B cell (primary cell): ENCODE measurements at regions of chr3 and their contacts with region 1.

Region 1: DNA sequence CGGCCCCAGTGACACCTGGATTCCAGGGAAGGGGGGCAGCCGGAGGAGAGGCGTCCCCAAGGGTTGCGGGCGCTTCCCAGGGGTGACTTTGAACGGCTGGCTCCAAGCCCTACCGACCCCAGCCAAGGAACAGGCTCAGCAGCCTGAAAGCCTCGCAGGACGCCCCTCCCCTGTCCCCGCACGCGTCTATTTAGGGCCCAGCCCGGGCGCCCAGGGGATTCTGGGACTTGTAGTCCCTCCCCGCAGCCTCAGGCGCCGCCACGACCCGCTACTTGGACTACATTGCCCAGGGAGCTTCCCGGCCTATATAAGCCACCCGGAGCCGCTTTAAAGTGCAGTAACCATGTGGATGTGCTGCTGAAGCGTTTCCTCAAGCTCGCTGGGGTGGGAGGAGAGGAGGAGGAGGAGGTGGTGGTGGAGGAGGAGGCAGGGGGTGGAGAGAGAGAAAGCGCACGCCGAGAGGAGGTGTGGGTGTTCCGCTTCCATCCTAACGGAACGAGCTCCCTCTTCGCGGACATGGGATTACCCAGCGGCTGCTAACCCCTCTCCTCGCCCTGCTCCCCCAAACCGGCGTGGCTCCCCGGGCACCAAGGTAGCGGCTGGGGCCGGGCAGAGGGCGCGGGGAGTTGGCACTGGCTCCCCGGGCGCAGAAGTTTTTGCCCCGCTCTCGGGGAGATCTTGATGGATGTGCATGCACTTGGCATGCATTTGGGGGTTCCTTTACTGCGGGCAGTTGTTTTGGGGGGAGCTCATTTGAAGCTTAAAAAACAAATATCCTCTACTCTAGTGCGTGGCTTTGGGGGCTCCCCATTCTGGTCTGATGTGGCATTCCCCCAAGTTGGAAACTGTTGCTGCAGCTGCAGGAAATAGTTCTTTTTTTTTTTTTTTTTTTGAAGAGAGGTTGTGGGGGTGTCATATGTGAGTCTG is at the start of gene ITPR1:
- DNase-seq: peak; percentile 98
- ATAC-seq: peak; percentile 88
- H3K4me3 ChIP-seq: peak within 1 kb of the TSS; percentile 90 to 98 (median 92)
- H3K4me3 Mint-ChIP-seq: peak within 1 kb of the TSS; percentile 96
- H3K27ac ChIP-seq: peak within 1 kb of the TSS; percentile 86 to 89
- H3K27ac Mint-ChIP-seq: peak within 1 kb of the TSS; percentile 95
- H3K4me1 ChIP-seq: peaks cover 34 to 39% of the 10 kb centered on the region in 2 donors
- H3K4me1 Mint-ChIP-seq: peaks cover 48% of the 10 kb centered on the region
- H3K27me3 ChIP-seq: no peaks in the 10 kb centered on the region
- H3K27me3 Mint-ChIP-seq: no peaks in the 10 kb centered on the region
- CTCF ChIP-seq: no peak
- total RNA-seq, gene ITPR1: 332 and 357 TPM in 2 replicates

Region 2: DNA sequence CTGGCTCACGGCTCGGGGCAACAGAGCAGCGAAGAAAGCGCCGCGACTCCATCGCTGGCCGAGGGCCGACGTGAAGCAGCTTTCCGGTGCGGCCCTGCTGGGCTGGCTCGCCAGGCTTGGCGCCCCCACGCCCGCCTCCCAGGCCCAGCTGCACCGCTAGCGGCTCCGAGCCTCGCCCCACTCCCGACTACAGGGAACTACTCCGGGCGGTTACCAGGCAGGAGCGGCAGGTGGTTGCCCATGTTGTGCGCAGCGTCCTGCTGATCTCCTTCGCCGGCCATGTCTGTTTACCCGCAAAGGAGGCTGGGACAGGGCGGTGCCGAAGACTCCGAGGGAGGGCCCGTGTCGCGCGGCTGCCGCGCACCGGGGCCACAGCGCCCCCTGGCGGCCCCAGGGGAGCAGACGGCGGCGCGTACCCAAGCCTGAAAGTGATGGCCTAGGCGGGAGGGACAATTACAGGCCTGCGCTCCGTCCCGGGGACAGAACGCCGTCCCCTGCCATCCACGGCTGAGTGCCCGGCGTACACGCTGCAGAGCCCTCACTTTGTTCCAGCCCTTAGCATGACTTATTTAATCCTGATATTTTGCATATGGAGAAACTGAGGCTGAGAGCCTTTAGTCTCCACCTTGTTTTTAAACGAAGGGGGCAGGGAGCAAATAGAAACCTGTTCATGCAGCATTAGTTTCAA is 1313.7 kb before region 1 on chr3 and contains the start of gene CRBN:
- CTCF ChIA-PET with region 1: no interaction called
- POLR2A ChIA-PET with region 1: no interaction called
- intact Hi-C with region 1: loop called (anchors 2 kb)
- DNase-seq: peak; percentile 92
- ATAC-seq: peak; percentile 98
- H3K4me3 ChIP-seq: peak within 1 kb of the TSS; percentile 62 to 95 (median 93)
- H3K4me3 Mint-ChIP-seq: peak within 1 kb of the TSS; percentile 98
- H3K27ac ChIP-seq: peak within 1 kb of the TSS; percentile 28 to 84
- H3K27ac Mint-ChIP-seq: peak within 1 kb of the TSS; percentile 86
- H3K4me1 ChIP-seq: peaks cover 18 to 19% of the 10 kb centered on the region in 2 donors
- H3K4me1 Mint-ChIP-seq: peaks cover 37% of the 10 kb centered on the region
- H3K27me3 ChIP-seq: peaks cover 0 to 6% (median 0%) of the 10 kb centered on the region in 4 experiments
- H3K27me3 Mint-ChIP-seq: peaks cover 14% of the 10 kb centered on the region
- CTCF ChIP-seq: peak; percentile 98
- total RNA-seq, gene CRBN: 92.6 and 95.1 TPM in 2 replicates

Region 3: GRCh38 chr3:4350789-4351163 is 142.5 kb before region 1 on chr3:
- CTCF ChIA-PET with region 1: interaction called, 11 read pairs
- POLR2A ChIA-PET with region 1: no interaction called
- intact Hi-C with region 1: loop called (anchors 10 kb)
- DNase-seq: peak; percentile 73
- ATAC-seq: peak; percentile 74
- H3K4me3 ChIP-seq: peak overlapping the region in 4 of 5 experiments; percentile 7 to 54 (median 47)
- H3K4me3 Mint-ChIP-seq: peak overlapping the region; percentile 62
- H3K27ac ChIP-seq: no peak overlapping the region
- H3K27ac Mint-ChIP-seq: no peak overlapping the region
- H3K4me1 ChIP-seq: peaks cover 4 to 6% of the 10 kb centered on the region in 2 donors
- H3K4me1 Mint-ChIP-seq: peaks cover 9% of the 10 kb centered on the region
- H3K27me3 ChIP-seq: no peaks in the 10 kb centered on the region
- H3K27me3 Mint-ChIP-seq: no peaks in the 10 kb centered on the region
- CTCF ChIP-seq: peak; percentile 89

Region 4: GRCh38 chr3:4474683-4475490 is 18.4 kb before region 1 on chr3:
- CTCF ChIA-PET with region 1: interaction called, 3 read pairs
- POLR2A ChIA-PET with region 1: interaction called, 4 read pairs
- intact Hi-C with region 1: loop called (anchors 2 kb)
- DNase-seq: peak; percentile 38
- ATAC-seq: peak; percentile 56
- H3K4me3 ChIP-seq: no peak overlapping the region
- H3K4me3 Mint-ChIP-seq: peak overlapping the region; percentile 53
- H3K27ac ChIP-seq: peak overlapping the region; percentile 42 to 77
- H3K27ac Mint-ChIP-seq: peak overlapping the region; percentile 74
- H3K4me1 ChIP-seq: peaks cover 18 to 21% of the 10 kb centered on the region in 2 donors
- H3K4me1 Mint-ChIP-seq: peaks cover 14% of the 10 kb centered on the region
- H3K27me3 ChIP-seq: no peaks in the 10 kb centered on the region
- H3K27me3 Mint-ChIP-seq: no peaks in the 10 kb centered on the region
- CTCF ChIP-seq: no peak

Region 5: GRCh38 chr3:4524088-4525023 is 31.1 kb after region 1 on chr3:
- CTCF ChIA-PET with region 1: interaction called, 44 read pairs
- POLR2A ChIA-PET with region 1: interaction called, 8 read pairs
- intact Hi-C with region 1: loop called (anchors 1 kb)
- DNase-seq: no peak
- ATAC-seq: no peak
- H3K4me3 ChIP-seq: no peak overlapping the region
- H3K4me3 Mint-ChIP-seq: peak overlapping the region; percentile 21
- H3K27ac ChIP-seq: no peak overlapping the region
- H3K27ac Mint-ChIP-seq: peak overlapping the region; percentile 17
- H3K4me1 ChIP-seq: peaks cover 25 to 48% of the 10 kb centered on the region in 2 donors
- H3K4me1 Mint-ChIP-seq: peaks cover 73% of the 10 kb centered on the region
- H3K27me3 ChIP-seq: no peaks in the 10 kb centered on the region
- H3K27me3 Mint-ChIP-seq: no peaks in the 10 kb centered on the region
- CTCF ChIP-seq: no peak

Region 6: DNA sequence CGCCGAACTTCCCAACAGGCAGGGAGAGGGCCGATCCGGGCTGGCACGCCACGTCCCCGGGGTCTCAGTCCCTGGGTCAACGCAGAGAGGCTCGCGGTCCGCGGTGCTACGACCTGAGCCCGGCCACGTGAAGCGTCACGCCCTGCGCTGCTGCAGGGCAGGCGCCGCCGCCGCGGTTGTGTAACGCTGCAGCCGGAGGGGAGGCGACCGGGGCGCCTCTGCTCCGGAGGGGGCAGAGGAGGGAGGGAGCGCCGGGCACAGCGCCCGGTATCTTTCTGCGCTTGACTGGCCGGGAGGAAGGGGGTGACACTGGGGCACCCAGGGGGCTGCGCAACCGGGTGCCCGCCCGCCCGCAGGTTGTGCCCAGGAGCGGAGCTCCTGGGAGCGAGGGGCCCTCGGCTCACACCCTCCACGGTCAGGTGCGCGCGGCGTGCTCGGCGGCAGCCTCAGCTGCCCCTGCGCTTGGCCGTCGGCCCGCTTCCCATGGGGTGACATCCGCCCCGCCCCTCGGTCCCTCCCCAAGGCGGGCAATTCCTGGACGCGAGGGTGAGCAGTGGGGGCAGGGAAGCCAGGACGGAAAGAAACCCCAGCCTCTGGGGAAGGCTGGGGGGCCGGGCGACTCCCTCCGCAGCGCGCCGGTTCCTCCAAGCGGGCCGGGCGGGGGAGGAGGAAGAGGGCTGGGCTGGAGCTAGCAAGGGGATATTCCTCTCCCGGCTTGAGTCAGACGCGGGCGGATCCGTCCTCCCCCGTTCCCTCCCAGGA is 485.1 kb after region 1 on chr3:
- CTCF ChIA-PET with region 1: no interaction called
- POLR2A ChIA-PET with region 1: interaction called, 3 read pairs
- intact Hi-C with region 1: loop called (anchors 1 kb)
- DNase-seq: peak; percentile 91
- ATAC-seq: peak; percentile 48
- H3K4me3 ChIP-seq: peak overlapping the region; percentile 73 to 91 (median 85)
- H3K4me3 Mint-ChIP-seq: peak overlapping the region; percentile 98
- H3K27ac ChIP-seq: peak overlapping the region; percentile 97 to 99
- H3K27ac Mint-ChIP-seq: peak overlapping the region; percentile 96
- H3K4me1 ChIP-seq: peaks cover 52 to 58% of the 10 kb centered on the region in 2 donors
- H3K4me1 Mint-ChIP-seq: peaks cover 62% of the 10 kb centered on the region
- H3K27me3 ChIP-seq: no peaks in the 10 kb centered on the region
- H3K27me3 Mint-ChIP-seq: no peaks in the 10 kb centered on the region
- CTCF ChIP-seq: no peak